ENCODE measurements at regions of chr12 and their contacts with region 1.

Region 1: DNA sequence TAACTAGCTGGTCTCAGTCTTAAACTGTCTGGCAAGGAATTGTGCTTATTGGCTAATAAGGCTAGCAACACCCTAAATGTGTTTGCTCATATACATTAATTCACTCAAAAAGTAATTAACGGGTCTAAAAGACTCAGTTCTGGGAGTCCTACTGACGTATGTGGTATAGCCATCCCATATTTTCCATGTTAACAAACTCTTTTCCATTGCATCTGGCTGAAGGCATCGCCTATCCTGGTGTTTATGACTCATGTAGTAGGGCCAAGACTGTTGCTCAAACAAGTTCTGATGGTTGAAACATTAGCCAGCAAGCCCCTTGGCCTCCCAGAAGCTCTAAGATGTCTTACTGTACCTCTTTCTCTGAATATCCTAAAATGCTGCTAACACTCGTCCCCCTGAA is 98.5 kb downstream of the PHLDA1 start:
- DNase-seq: no peak
- H3K4me3 Mint-ChIP-seq: no peak overlapping the region
- H3K27ac Mint-ChIP-seq: peak overlapping the region; percentile 73
- H3K4me1 Mint-ChIP-seq: peaks cover 44% of the 10 kb centered on the region
- H3K27me3 Mint-ChIP-seq: no peaks in the 10 kb centered on the region

Region 2: GRCh38 chr12:75212072-75212471 is 721.0 kb before region 1 on chr12:
- intact Hi-C with region 1: no loop called
- DNase-seq: no peak
- H3K4me3 Mint-ChIP-seq: no peak overlapping the region
- H3K27ac Mint-ChIP-seq: no peak overlapping the region
- H3K4me1 Mint-ChIP-seq: no peaks in the 10 kb centered on the region
- H3K27me3 Mint-ChIP-seq: peaks cover 22% of the 10 kb centered on the region

Region 3: GRCh38 chr12:75511116-75512048 is 421.7 kb before region 1 on chr12 and contains the start of gene KRR1:
- intact Hi-C with region 1: loop called (anchors 5 kb)
- DNase-seq: peak; percentile 91
- H3K4me3 Mint-ChIP-seq: peak within 1 kb of the TSS; percentile 96
- H3K27ac Mint-ChIP-seq: peak within 1 kb of the TSS; percentile 98
- H3K4me1 Mint-ChIP-seq: peaks cover 30% of the 10 kb centered on the region
- H3K27me3 Mint-ChIP-seq: no peaks in the 10 kb centered on the region
- total RNA-seq, gene KRR1: 114 and 119 TPM in 2 replicates

Region 4: GRCh38 chr12:75648856-75649255 is 284.2 kb before region 1 on chr12:
- intact Hi-C with region 1: no loop called
- DNase-seq: no peak
- H3K4me3 Mint-ChIP-seq: no peak overlapping the region
- H3K27ac Mint-ChIP-seq: no peak overlapping the region
- H3K4me1 Mint-ChIP-seq: peaks cover 13% of the 10 kb centered on the region
- H3K27me3 Mint-ChIP-seq: peaks cover 48% of the 10 kb centered on the region

Region 5: DNA sequence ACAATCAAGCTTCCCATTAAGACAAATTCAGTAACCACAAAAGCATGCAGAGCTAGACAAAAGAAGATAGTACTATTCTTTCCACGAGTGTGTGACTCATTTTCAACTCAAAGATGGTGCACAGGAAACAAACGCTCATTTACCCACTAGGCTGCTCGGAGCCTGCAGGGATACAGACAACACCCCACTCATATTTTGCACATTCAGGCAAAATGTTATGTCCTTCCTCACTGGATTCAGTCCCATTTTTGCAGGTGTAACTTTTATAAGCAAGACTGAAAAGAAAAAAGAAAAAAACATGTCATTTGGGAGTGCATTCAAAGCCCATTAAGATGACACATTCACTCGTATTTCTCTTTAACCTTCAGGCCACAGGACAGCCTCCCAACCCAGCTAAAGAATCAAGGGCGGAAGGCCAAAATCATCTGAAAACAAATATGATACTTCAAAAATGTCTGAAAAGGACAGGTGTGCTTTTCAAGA is 274.2 kb before region 1 on chr12:
- intact Hi-C with region 1: loop called (anchors 5 kb)
- DNase-seq: peak; percentile 9
- H3K4me3 Mint-ChIP-seq: no peak overlapping the region
- H3K27ac Mint-ChIP-seq: peak overlapping the region; percentile 5
- H3K4me1 Mint-ChIP-seq: peaks cover 34% of the 10 kb centered on the region
- H3K27me3 Mint-ChIP-seq: peaks cover 6% of the 10 kb centered on the region

Region 6: DNA sequence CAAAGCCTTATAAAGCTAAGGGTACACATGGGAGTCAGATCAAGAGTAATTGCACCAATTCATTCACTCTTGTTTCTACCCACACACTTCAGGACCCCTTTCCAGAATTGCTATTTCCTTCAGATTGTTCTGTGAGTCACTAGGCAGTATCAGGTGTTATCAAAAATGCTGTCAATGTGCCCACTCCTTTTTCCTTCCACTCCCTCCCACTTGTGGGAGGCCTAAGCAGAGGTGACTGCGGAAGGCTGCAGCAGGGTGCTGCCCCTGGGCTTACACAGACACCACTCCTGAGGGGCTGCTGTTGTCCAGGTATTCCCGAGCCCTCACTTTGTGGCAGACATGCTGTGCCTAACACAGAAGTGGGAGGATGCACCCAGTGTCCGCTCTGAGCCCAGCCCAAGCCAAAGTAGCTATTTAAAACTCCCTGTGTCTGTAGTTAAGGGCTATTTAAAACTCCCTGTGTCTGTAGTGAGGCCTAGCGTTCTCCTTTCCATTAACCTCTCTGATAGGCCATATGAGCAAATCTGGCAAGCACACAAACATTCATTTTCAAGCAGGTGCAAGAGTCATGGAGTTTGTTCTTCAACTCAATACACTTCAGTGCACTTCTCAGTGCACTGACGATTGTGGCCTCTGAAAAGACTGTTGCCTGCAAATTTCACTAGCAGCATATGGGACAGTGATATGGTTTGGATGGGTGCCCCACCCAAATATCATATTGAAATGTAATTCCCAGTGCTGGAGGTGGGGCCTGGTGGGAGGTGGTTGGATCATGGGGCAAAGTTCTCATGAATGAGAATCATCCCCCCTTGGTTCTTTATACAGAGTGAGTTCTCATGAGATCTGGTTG is 19.4 kb before region 1 on chr12:
- intact Hi-C with region 1: loop called (anchors 1 kb)
- DNase-seq: no peak
- H3K4me3 Mint-ChIP-seq: no peak overlapping the region
- H3K27ac Mint-ChIP-seq: peak overlapping the region; percentile 40
- H3K4me1 Mint-ChIP-seq: peaks cover 27% of the 10 kb centered on the region
- H3K27me3 Mint-ChIP-seq: peaks cover 1% of the 10 kb centered on the region

Region 7: GRCh38 chr12:75994186-75994731 is 61.2 kb after region 1 on chr12:
- intact Hi-C with region 1: loop called (anchors 1 kb)
- DNase-seq: no peak
- H3K4me3 Mint-ChIP-seq: no peak overlapping the region
- H3K27ac Mint-ChIP-seq: peak overlapping the region; percentile 79
- H3K4me1 Mint-ChIP-seq: peaks cover 56% of the 10 kb centered on the region
- H3K27me3 Mint-ChIP-seq: no peaks in the 10 kb centered on the region